Left ventricle myocardium superior (tissue), 1 donor: ENCODE measurements at regions of chr2 and their contacts with region 1.

Region 1: DNA sequence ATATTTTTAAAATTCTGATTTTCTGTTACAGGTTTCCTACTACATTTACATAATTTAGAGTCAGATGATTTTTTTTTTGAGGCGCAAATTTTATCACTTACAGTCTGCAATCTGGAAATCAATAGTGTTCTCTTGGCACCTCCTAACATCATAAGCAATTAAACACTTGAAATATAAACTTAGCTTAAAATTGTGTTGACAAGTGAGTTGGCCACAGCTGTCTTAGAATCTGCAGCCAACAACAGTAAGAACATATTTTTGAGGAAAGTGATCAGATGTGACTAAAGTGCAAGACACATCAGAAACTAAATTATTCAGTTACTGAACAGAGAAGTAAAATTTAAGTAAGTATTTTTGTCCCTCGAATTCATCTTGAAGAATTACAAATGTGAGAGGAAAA is 726.7 kb upstream of the LRATD1 start:
- DNase-seq: no peak
- ATAC-seq: no peak

Region 2: DNA sequence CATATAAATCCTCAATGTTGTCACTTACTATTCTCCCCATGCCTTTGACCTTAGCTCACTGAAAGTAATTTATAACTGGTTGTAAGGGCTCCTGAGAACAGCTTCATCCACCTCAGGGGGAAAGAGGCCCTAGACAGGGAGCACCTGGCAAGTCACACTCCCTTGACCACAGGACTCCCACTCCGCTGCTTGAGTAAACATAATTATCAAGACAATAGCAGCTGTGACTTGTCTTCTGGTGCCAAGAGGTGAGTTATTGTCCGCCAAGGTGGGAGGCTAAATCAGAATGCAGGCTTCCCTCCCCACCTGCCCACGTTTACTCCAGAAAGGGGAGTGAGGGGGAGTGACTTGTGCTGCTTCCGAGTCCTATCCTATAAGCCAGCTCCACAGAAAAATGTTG is 496.0 kb after region 1 on chr2:
- intact Hi-C with region 1: loop called (anchors 10 kb)
- DNase-seq: no peak
- ATAC-seq: no peak